Activated T-helper 1 cell treated with anti-CD3 and anti-CD28 coated beads, Interleukin-12 subunit alpha, Interleukin-12 subunit beta, Interleukin-2, Interleukin-4 antibody, amounts not matched to agents 30 ng/mL and 10 ng/mL and 1 ng/mL, durations not matched to agents 14 hours and 24 hours and 36 hours (primary cell): ENCODE measurements at regions of chr18 and their contacts with region 1.

Region 1: DNA sequence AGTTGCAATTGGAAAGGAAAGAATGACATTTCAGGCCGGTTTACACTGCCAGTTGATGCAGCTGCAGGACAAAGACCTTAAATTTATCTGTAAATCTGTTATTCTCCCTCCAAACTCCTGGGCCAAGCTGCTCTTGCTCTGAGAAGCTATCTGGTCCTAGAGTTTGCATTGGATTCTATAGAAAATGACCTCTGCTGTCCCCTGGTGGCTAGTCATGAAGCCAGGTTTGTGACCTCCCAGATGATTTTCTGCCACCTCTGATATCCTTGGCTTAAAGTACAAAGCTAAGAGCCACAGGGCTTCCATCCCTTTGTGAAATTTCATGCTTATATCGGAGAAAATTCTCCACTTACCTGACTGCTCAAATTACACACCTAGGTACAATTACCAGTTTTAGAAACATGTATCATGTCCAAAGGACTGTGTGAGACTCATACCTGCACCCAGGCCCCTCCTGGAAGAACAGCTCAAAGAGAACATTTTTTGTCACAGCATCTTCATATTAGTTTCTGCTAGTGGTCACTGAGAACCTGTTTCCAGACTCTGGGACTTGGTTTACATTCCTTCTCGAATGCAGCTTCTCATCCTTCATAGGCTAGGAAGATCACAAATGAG is 28.9 kb upstream of the IER3IP1 start:
- DNase-seq: peak; percentile 5
- H3K4me3 Mint-ChIP-seq: no peak overlapping the region
- H3K27ac Mint-ChIP-seq: no peak overlapping the region
- H3K4me1 Mint-ChIP-seq: no peaks in the 10 kb centered on the region
- H3K27me3 Mint-ChIP-seq: peaks cover 18% of the 10 kb centered on the region

Region 2: DNA sequence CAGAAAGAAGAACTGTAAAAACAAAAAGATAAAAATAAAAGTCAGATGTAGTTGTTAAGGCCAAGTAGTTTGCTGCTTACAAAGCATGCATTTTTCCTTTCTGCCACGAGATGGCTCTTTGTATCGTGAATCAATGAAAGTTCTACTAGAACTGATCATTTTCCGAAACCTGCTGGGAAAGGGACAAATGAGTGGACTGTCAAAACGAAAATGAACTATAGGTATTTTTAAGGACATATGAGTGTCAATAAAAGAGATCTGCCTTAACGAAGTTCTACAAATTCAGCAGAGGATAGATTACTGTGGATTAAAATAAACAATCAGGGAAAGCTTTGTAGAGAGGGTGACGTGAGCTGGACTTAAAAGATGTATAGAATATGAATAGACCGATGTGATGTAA is 154.5 kb before region 1 on chr18:
- intact Hi-C with region 1: loop called (anchors 1 kb)
- DNase-seq: peak; percentile 1
- H3K4me3 Mint-ChIP-seq: no peak overlapping the region
- H3K27ac Mint-ChIP-seq: no peak overlapping the region
- H3K4me1 Mint-ChIP-seq: no peaks in the 10 kb centered on the region
- H3K27me3 Mint-ChIP-seq: peaks cover 11% of the 10 kb centered on the region

Region 3: DNA sequence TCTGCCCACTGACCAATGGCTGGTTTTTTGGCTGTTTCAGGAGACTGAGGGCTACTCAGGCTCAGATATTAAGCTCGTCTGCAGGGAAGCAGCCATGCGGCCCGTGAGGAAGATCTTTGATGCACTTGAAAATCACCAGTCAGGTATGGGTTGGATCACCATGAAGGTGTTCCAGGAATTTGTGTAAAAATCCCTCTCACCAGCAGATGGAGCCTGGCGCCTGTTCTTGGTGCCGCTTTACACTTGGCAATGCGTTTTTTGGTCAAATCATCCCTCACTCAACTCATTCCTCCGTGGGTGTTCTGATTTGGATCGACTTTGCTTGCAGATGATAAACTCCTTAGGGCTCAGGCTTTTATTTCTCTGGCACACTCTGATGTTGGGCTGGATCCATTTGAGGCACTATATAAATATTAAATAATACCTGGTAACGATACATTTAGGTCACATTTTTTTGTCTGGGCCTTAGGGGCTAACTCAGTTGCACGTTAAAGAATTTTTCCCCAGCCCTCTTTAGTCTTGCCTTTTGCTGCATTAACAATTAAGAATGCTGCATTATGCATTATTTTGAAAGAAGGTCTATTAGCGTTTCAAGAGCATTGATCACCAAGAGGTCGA is 104.7 kb before region 1 on chr18:
- intact Hi-C with region 1: loop called (anchors 1 kb)
- DNase-seq: peak; percentile 16
- H3K4me3 Mint-ChIP-seq: no peak overlapping the region
- H3K27ac Mint-ChIP-seq: no peak overlapping the region
- H3K4me1 Mint-ChIP-seq: no peaks in the 10 kb centered on the region
- H3K27me3 Mint-ChIP-seq: no peaks in the 10 kb centered on the region

Region 4: GRCh38 chr18:47235096-47235495 is 30.1 kb after region 1 on chr18:
- intact Hi-C with region 1: no loop called
- DNase-seq: no peak
- H3K4me3 Mint-ChIP-seq: no peak overlapping the region
- H3K27ac Mint-ChIP-seq: no peak overlapping the region
- H3K4me1 Mint-ChIP-seq: no peaks in the 10 kb centered on the region
- H3K27me3 Mint-ChIP-seq: peaks cover 20% of the 10 kb centered on the region

Region 5: GRCh38 chr18:47254341-47254939 is 49.4 kb after region 1 on chr18:
- intact Hi-C with region 1: no loop called
- DNase-seq: peak; percentile 10
- H3K4me3 Mint-ChIP-seq: no peak overlapping the region
- H3K27ac Mint-ChIP-seq: no peak overlapping the region
- H3K4me1 Mint-ChIP-seq: no peaks in the 10 kb centered on the region
- H3K27me3 Mint-ChIP-seq: peaks cover 65% of the 10 kb centered on the region

Region 6: GRCh38 chr18:47404845-47405244 is 199.8 kb after region 1 on chr18:
- intact Hi-C with region 1: no loop called
- DNase-seq: no peak
- H3K4me3 Mint-ChIP-seq: no peak overlapping the region
- H3K27ac Mint-ChIP-seq: no peak overlapping the region
- H3K4me1 Mint-ChIP-seq: no peaks in the 10 kb centered on the region
- H3K27me3 Mint-ChIP-seq: no peaks in the 10 kb centered on the region

Region 7: DNA sequence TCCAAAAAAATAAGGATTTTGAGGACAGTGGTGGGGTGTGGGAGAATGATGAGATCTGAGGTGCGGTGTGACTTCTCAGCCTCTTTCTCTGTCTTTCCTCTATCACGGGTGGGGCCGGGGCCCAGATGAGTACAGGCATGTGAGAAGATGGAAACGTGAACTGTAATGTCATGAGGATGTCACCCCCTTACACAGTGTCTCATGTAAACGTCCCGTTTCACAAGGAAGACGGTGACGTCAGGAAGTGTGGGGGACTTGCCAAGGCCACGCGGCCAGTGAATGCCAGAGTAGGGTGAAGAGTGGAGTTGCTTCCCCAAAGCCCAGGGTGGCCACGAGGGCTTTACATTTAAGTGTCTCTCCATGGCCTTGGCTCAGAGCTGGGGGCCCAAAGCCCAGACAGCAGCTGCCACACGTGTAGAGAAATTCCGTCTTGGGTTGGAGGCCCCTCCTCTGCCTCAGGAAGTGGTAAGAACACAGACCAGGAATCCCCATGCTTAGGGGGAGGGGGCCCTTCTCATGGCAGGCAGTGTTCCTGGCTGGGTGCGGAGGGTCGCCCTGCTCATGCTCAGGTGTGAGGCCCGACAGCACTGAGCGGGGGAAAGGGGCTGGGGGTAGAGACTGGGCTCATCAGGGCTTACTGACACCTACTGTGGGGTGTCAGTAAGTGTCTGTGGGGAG is 1826.6 kb after region 1 on chr18:
- intact Hi-C with region 1: no loop called
- DNase-seq: no peak
- H3K4me3 Mint-ChIP-seq: no peak overlapping the region
- H3K27ac Mint-ChIP-seq: peak overlapping the region; percentile 15
- H3K4me1 Mint-ChIP-seq: peaks cover 12% of the 10 kb centered on the region
- H3K27me3 Mint-ChIP-seq: no peaks in the 10 kb centered on the region